Mucosa of descending colon (tissue), 3 donors: ENCODE measurements at regions of chr10 and their contacts with region 1.

Region 1: GRCh38 chr10:99430451-99431189 is at the start of gene GOT1:
- DNase-seq: peak; percentile 97 to 98 (median 97)
- ATAC-seq: peak; percentile 96
- H3K4me3 ChIP-seq: peak within 1 kb of the TSS; percentile 70
- H3K4me1 ChIP-seq: no peaks in the 10 kb centered on the region
- CTCF ChIP-seq: no peak
- total RNA-seq, gene GOT1: 56.7 to 105 (median 101) TPM

Region 2: GRCh38 chr10:99534939-99535763 is 104.5 kb after region 1 on chr10:
- intact Hi-C with region 1: loop called (anchors 5 to 10 kb)
- DNase-seq: peak in 1 of 3 donors; percentile 60
- ATAC-seq: peak; percentile 49
- H3K4me3 ChIP-seq: peak overlapping the region; percentile 3
- H3K4me1 ChIP-seq: peaks cover 29% of the 10 kb centered on the region
- CTCF ChIP-seq: no peak

Region 3: GRCh38 chr10:99548041-99548530 is 117.5 kb after region 1 on chr10:
- intact Hi-C with region 1: loop called in 1 of 2 experiments (anchors 10 kb)
- DNase-seq: no peak
- ATAC-seq: peak; percentile 66
- H3K4me3 ChIP-seq: no peak overlapping the region
- H3K4me1 ChIP-seq: no peaks in the 10 kb centered on the region
- CTCF ChIP-seq: peak; percentile 17

Region 4: GRCh38 chr10:99619851-99620712 is 189.5 kb after region 1 on chr10 and contains the start of gene SLC25A28:
- intact Hi-C with region 1: loop called (anchors 10 kb)
- DNase-seq: peak; percentile 94 to 97 (median 96)
- ATAC-seq: peak; percentile 0
- H3K4me3 ChIP-seq: peak within 1 kb of the TSS; percentile 71
- H3K4me1 ChIP-seq: peaks cover 7% of the 10 kb centered on the region
- CTCF ChIP-seq: peak; percentile 13
- total RNA-seq, gene SLC25A28: 38.2 to 64.4 (median 39.6) TPM